Activated CD4-positive, alpha-beta T cell treated with anti-CD3 and anti-CD28 coated beads, Interleukin-2, amount 10 ng/mL, durations not matched to agents 24 days and 14 days (primary cell): ENCODE measurements at regions of chr16 and their contacts with region 1.

Region 1: GRCh38 chr16:77236063-77236511 is 36.9 kb downstream of the SYCE1L start:
- DNase-seq: peak; percentile 96
- H3K4me3 Mint-ChIP-seq: peak overlapping the region; percentile 64
- H3K27ac Mint-ChIP-seq: no peak overlapping the region
- H3K4me1 Mint-ChIP-seq: peaks cover 3% of the 10 kb centered on the region
- H3K27me3 Mint-ChIP-seq: peaks cover 15% of the 10 kb centered on the region

Region 2: GRCh38 chr16:77308163-77308561 is 72.1 kb after region 1 on chr16:
- intact Hi-C with region 1: loop called (anchors 2 kb)
- DNase-seq: no peak
- H3K4me3 Mint-ChIP-seq: no peak overlapping the region
- H3K27ac Mint-ChIP-seq: peak overlapping the region; percentile 90
- H3K4me1 Mint-ChIP-seq: peaks cover 8% of the 10 kb centered on the region
- H3K27me3 Mint-ChIP-seq: no peaks in the 10 kb centered on the region

Region 3: DNA sequence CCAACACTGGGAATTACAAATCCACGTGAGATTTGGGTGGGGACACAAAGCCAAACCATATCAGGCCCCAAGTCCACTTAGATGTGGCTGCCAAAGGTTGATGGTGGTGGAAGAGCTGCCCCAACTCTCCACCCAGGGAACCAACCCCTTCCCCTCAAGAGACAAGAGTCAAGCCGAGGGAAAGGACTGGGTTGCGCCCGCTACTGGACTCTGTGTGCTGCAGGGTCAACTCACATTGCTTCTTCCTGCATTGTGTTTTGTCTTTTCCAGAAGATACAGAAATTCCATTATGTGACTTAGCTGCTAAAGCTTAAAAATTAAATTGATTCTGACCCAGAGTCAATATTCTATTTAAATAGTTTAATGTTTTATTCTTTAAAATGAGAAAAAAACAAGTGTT is 140.3 kb after region 1 on chr16:
- intact Hi-C with region 1: loop called (anchors 1 kb)
- DNase-seq: peak; percentile 64
- H3K4me3 Mint-ChIP-seq: no peak overlapping the region
- H3K27ac Mint-ChIP-seq: no peak overlapping the region
- H3K4me1 Mint-ChIP-seq: no peaks in the 10 kb centered on the region
- H3K27me3 Mint-ChIP-seq: peaks cover 4% of the 10 kb centered on the region

Region 4: DNA sequence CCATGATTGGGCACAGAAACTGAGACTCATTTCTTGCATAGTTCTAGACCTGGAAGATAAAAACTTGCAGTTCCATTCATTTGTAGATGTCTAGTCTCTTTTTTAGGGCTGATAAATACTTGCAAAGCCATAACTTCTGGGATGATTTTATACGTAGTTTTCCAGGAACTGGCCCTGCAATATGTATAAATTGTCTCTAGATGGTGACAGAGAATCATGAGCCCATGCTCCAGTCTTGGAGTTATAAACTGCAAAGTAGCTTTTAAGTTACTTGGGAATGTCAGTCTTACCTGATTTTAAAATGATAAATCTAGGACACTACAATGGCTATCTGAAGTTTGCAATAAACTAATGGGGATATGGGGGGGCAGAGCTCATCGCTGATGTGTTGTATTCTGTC is 201.8 kb after region 1 on chr16:
- intact Hi-C with region 1: loop called (anchors 5 kb)
- DNase-seq: no peak
- H3K4me3 Mint-ChIP-seq: no peak overlapping the region
- H3K27ac Mint-ChIP-seq: no peak overlapping the region
- H3K4me1 Mint-ChIP-seq: no peaks in the 10 kb centered on the region
- H3K27me3 Mint-ChIP-seq: peaks cover 36% of the 10 kb centered on the region

Region 5: DNA sequence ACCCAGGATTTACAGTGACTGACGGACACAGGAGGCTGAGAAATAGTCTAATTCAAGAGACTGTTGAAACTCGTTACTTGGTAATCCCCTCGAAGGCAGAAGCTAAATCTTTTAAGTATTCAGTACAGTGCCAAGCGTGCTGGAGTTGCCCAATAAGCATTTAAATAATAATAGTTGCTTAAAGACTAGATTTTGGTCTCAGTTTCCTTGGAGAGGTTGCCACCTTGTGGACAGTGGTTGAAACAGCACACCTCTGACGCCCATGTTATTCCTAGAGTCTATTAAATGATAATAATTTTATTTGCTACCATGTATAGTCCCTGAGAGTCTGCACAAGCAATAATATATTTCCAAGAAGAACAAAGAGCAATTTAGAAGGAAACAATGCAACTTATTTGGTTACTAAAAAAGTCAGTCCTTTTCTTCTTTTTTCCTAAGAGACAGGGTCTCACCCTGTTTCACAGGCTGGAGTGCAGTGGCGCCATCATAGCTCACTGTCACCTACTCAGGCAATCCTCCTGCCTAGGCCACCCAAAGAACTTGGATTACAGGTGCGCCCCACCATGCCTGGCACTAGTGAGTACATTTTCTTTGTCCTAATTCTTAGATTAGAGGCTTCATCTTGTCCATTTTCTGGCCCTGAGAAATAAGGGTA is 348.2 kb after region 1 on chr16:
- intact Hi-C with region 1: loop called (anchors 1 kb)
- DNase-seq: peak; percentile 80
- H3K4me3 Mint-ChIP-seq: no peak overlapping the region
- H3K27ac Mint-ChIP-seq: no peak overlapping the region
- H3K4me1 Mint-ChIP-seq: peaks cover 7% of the 10 kb centered on the region
- H3K27me3 Mint-ChIP-seq: peaks cover 9% of the 10 kb centered on the region

Region 6: DNA sequence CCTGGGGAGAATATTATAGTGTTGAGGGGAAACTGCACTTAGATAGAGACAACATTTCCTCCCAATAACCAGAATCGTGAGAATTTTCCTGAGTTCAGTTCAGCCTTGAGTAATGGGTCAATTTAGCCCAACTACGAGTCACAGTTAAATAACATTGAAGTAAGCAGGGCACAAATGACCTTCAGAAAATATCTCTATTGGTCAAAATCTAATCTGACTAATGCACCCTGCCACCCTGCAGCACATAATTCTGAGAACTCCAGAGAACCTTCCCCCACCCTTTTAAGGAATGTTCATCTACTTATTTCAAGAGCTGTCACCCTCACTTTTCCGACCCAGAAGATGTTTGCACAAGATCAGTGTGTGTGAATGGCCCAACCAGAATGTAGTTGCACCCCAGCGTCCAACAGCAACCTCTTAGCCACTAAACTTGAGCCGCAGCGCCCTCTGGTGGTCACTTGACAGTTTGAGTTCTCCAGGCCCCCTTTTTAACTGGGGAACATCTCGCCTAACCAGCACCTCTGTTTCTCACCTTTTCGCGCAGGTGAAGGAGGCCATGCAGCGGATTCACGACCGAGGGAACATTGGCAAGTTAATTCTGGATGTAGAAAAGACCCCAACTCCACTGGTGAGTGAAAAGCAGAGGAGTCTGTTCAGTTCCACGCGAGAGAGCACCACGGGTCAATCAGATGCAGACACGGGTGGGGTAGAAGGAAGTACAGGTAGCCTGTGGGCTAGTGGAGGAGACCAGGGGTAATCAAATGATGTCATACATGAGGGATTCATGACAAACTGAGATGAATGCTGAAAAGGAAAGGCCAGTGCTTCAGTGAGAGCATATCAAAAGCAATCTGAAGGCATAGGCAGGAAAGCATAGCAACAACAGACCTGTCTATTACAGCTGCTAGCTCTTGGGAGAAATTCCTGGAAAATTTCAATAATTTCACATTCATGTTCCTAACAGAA is 735.5 kb after region 1 on chr16:
- intact Hi-C with region 1: loop called (anchors 5 kb)
- DNase-seq: peak; percentile 91
- H3K4me3 Mint-ChIP-seq: no peak overlapping the region
- H3K27ac Mint-ChIP-seq: no peak overlapping the region
- H3K4me1 Mint-ChIP-seq: no peaks in the 10 kb centered on the region
- H3K27me3 Mint-ChIP-seq: no peaks in the 10 kb centered on the region

Region 7: GRCh38 chr16:78099372-78100161 is 863.5 kb after region 1 on chr16 and contains the start of gene WWOX:
- intact Hi-C with region 1: loop called (anchors 5 kb)
- DNase-seq: peak; percentile 99
- H3K4me3 Mint-ChIP-seq: peak within 1 kb of the TSS; percentile 93
- H3K27ac Mint-ChIP-seq: peak within 1 kb of the TSS; percentile 95
- H3K4me1 Mint-ChIP-seq: peaks cover 15% of the 10 kb centered on the region
- H3K27me3 Mint-ChIP-seq: peaks cover 1% of the 10 kb centered on the region
- total RNA-seq, gene WWOX: 15.0 and 16.1 TPM in 2 replicates